Posterior vena cava (tissue), 2 donors: ENCODE measurements at regions of chr3 and their contacts with region 1.

Region 1: DNA sequence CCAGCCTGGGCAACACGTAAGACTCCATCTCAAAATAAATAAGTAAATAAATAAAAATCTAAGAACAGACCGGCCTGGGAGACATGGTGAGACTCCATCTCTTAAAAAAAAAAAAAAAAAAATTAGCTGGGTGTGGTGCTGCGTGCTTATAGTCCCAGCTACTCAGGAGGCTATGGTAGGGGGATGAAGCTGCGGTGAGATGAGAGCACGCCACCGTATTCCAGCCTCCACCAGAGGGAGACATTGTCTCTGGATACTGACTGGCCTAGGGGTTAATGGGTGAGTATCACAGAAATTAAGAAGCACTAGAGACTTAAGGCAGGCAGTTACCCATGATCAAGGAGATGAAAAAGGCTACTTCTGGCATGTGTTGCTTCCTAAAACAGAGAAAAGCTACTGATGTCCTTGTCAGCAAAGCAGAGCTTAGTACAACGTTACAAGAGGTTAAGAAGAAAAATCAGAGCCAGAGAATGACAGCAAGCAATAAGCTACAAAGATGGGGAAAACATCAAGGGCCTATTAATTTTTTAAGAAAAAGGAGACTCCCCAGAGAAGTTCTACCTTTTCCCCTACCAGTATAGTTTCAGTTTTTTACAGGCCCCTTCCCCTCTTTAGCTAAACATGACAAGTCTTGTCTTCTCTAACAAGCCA is 8.6 kb downstream of the TFRC start:
- DNase-seq: no peak

Region 2: GRCh38 chr3:196192036-196192523 is 118.8 kb after region 1 on chr3:
- intact Hi-C with region 1: loop called in 1 of 2 experiments (anchors 10 kb)
- DNase-seq: no peak

Region 3: DNA sequence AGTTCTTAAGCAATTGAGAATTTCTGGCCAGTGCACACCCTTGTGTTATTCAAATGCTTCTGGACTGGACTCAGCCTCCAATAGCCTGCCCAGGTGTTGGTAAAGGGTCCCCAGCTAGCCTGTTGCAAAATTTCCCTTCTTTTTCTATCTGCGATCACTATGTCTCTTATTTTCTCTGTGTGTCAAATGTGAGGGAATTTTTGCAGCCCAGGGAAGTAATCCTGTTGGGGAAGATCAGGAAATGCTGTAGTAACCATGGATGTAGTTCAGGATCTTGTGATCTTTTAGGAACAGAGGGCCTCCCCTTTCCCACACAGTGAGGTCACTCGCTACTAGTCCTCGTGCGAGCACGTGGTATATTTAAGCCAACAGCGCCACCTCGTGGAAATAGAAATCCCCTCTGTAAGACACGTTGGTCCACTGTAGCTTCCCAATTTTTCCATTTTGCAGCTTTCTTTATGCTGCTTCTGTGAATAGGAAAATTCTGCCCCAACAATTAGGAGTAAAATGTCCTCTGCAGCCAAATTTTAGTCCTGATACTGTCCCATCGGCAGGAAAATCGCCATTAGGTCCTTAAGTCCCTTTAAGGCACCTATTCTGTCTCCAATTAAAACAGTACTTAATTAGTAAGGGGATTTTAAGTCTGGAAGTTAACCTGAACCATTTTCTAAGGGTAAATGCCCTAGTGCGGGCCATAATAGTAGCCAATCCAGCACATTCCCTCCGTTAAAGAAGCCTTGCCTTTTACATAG is 445.8 kb after region 1 on chr3:
- intact Hi-C with region 1: loop called in 1 of 2 experiments (anchors 10 kb)
- DNase-seq: no peak